SK-N-SH (cell line): ENCODE measurements at regions of chr1 and their contacts with region 1.

Region 1: GRCh38 chr1:8671306-8671917 is 146.0 kb downstream of the RERE start:
- DNase-seq: peak; percentile 60
- H3K4me3 ChIP-seq: no peak overlapping the region
- H3K27ac ChIP-seq: no peak overlapping the region; a peak in 1 of 4 replicates
- H3K4me1 ChIP-seq: peaks cover 30 to 52% of the 10 kb centered on the region in 2 experiments
- H3K27me3 ChIP-seq: no peaks in the 10 kb centered on the region
- CTCF ChIP-seq: peak; percentile 81
- EP300 ChIP-seq: no peak
- RAD21 ChIP-seq: peak; percentile 84

Region 2: DNA sequence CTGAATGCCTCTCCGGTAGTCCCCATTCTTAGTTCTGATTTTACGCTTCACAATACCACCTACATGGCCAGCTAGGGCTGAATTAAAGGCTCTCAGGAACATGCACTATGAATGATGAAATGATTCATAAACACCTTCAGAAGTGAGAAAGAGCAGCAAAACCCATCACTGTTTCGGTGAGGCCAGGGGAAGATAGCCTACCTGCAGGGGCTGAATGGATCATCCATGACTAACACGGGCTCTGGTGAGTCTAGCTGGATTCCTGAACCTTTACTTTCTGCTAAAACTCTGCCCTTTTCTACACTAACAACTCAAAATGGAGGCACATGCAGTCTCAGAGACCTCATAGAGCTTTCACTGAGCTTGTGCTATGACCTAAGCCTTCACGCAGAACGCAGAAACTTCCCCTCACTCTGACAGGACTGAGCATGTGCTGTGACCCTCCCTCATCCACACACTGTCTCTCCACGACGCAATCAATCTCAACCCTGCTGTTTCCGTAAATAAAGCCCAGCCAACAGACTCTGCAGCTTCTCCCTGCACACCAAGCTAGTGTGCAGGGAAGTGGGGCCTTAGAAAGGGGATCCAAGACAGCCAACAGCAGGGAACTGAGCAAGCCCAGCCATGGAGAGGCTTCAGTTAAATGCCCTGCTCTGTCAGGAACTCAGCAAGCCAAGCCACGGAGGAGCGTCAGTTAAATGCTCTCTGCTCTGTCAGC is 145.7 kb before region 1 on chr1:
- CTCF ChIA-PET with region 1: no interaction called
- POLR2A ChIA-PET with region 1: no interaction called
- DNase-seq: peak; percentile 79
- H3K4me3 ChIP-seq: peak overlapping the region; percentile 49 to 70
- H3K27ac ChIP-seq: peak overlapping the region; percentile 85 to 87
- H3K4me1 ChIP-seq: peaks cover 15 to 24% of the 10 kb centered on the region in 2 experiments; a peak in 3 of 4 replicates
- H3K27me3 ChIP-seq: no peaks in the 10 kb centered on the region
- CTCF ChIP-seq: no peak
- EP300 ChIP-seq: peak; percentile 26 to 60; a peak in 1 of 4 replicates
- RAD21 ChIP-seq: peak; percentile 39

Region 3: GRCh38 chr1:8660411-8660828 is 11.0 kb before region 1 on chr1:
- CTCF ChIA-PET with region 1: interaction called, 49 read pairs
- POLR2A ChIA-PET with region 1: no interaction called
- DNase-seq: peak; percentile 17
- H3K4me3 ChIP-seq: peak overlapping the region in 1 of 2 experiments; percentile 12; a peak in 1 of 4 replicates
- H3K27ac ChIP-seq: peak overlapping the region; percentile 71 to 96
- H3K4me1 ChIP-seq: peaks cover 27 to 46% of the 10 kb centered on the region in 2 experiments
- H3K27me3 ChIP-seq: no peaks in the 10 kb centered on the region
- CTCF ChIP-seq: no peak
- EP300 ChIP-seq: peak in 1 of 2 experiments; percentile 34; a peak in 1 of 4 replicates
- RAD21 ChIP-seq: 0 out of 2 replicates have a peak, but pooled peaks have one; percentile 3

Region 4: GRCh38 chr1:9058465-9058864 is 387.1 kb after region 1 on chr1:
- CTCF ChIA-PET with region 1: no interaction called
- POLR2A ChIA-PET with region 1: no interaction called
- DNase-seq: no peak
- H3K4me3 ChIP-seq: no peak overlapping the region
- H3K27ac ChIP-seq: no peak overlapping the region
- H3K4me1 ChIP-seq: no peaks in the 10 kb centered on the region
- H3K27me3 ChIP-seq: no peaks in the 10 kb centered on the region
- CTCF ChIP-seq: no peak
- EP300 ChIP-seq: no peak
- RAD21 ChIP-seq: no peak